ENCODE measurements at regions of chr14 and their contacts with region 1.

Region 1: GRCh38 chr14:75198291-75198933 is 22.0 kb upstream of the TMED10 start:
- DNase-seq: no peak
- H3K4me3 ChIP-seq: no peak overlapping the region
- H3K27ac ChIP-seq: no peak overlapping the region
- H3K4me1 ChIP-seq: peaks cover 56% of the 10 kb centered on the region
- H3K27me3 ChIP-seq: no peaks in the 10 kb centered on the region
- CTCF ChIP-seq: no peak

Region 2: GRCh38 chr14:75176142-75176820 is 22.1 kb before region 1 on chr14 and contains the start of gene TMED10:
- CTCF ChIA-PET with region 1: interaction called, 5 read pairs
- POLR2A ChIA-PET with region 1: interaction called, 6 read pairs
- intact Hi-C with region 1: loop called (anchors 1 kb)
- DNase-seq: peak; percentile 84 to 96
- H3K4me3 ChIP-seq: peak within 1 kb of the TSS; percentile 80
- H3K27ac ChIP-seq: peak within 1 kb of the TSS; percentile 94
- H3K4me1 ChIP-seq: peaks cover 26% of the 10 kb centered on the region
- H3K27me3 ChIP-seq: no peaks in the 10 kb centered on the region
- CTCF ChIP-seq: no peak
- total RNA-seq, gene TMED10: 709 and 770 TPM in 2 replicates

Region 3: GRCh38 chr14:75223664-75224154 is 25.3 kb after region 1 on chr14:
- CTCF ChIA-PET with region 1: no interaction called
- POLR2A ChIA-PET with region 1: interaction called, 6 read pairs
- intact Hi-C with region 1: loop called (anchors 2 kb)
- DNase-seq: peak; percentile 41 to 56
- H3K4me3 ChIP-seq: no peak overlapping the region
- H3K27ac ChIP-seq: peak overlapping the region; percentile 42
- H3K4me1 ChIP-seq: peaks cover 62% of the 10 kb centered on the region
- H3K27me3 ChIP-seq: no peaks in the 10 kb centered on the region
- CTCF ChIP-seq: no peak

Region 4: DNA sequence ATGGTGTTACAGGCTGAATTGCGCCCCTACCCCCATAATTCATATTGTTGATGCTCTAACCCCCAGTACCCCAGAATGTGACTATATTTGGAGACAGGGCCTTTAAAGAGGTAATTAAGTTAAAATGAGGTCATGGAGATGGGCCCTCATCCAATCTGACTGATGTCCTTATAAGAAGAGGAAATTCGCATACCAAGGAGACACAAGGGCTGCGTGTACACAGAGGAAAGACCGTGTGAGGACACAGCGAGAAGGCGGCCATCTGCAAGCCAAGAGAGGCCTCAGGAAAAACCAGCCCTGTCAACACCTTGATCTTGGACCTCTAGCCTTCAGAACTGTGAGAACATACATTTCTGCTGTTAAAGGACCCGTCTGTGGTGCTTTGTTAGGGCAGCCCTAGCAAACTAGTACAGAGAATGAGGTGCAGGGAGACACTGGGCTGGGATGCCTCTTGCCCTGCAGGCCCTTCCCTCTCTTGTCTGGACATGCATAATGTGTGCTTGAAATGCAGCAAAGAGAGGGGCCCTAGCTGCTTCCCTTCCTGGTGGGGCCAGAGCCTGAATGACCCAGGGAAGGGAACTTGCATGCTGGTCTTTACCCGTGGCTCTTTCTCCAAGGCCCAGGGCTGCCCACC is 903.1 kb after region 1 on chr14:
- CTCF ChIA-PET with region 1: no interaction called
- POLR2A ChIA-PET with region 1: no interaction called
- intact Hi-C with region 1: no loop called
- DNase-seq: no peak
- H3K4me3 ChIP-seq: no peak overlapping the region
- H3K27ac ChIP-seq: no peak overlapping the region
- H3K4me1 ChIP-seq: no peaks in the 10 kb centered on the region
- H3K27me3 ChIP-seq: peaks cover 90% of the 10 kb centered on the region
- CTCF ChIP-seq: no peak

Measured in PC-9 (cell line).